ENCODE measurements at regions of chr1 and their contacts with region 1.

Region 1: DNA sequence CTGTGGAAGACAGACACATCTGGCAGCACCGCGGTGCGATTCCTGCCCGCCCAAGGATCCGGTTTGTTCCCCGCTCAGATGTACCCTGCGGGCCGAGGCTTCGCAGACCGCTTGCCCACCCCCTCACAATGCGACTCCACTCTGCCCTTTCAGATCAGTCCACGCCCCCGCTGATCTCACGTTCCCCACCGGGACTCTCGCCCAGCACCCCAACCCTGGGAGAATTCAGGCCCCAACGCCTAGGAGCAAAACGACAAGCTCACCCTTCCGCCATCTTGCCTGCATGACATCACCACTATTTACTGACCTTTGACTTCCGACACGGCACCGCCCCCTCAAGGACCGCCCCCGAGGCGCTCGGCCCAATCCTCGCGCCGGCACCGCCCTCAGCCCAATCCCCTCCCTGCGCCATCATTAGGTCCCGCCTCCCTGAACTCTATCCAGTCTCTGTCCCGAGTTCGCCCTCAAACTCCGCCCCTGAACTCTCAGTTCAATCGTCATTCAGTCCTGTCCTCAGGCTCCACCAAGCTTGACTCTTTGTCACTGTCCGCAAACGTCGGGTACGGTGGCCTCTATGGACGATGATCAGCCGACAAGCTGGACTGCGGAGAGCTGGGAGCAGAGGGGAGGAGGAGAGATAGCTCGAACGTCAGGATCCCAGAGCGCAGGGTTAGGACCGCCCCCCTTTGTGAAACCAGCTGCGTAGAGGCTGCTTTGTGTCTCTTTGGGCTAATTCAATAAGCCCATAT is at the start of gene BSDC1:
- DNase-seq: peak; percentile 97
- H3K27ac ChIP-seq: peak within 1 kb of the TSS; percentile 85
- CTCF ChIP-seq: no peak

Region 2: GRCh38 chr1:32151319-32151787 is 243.0 kb before region 1 on chr1:
- CTCF ChIA-PET with region 1: no interaction called
- POLR2A ChIA-PET with region 1: no interaction called
- DNase-seq: no peak
- H3K27ac ChIP-seq: no peak overlapping the region
- CTCF ChIP-seq: no peak

Region 3: GRCh38 chr1:32372149-32372756 is 22.1 kb before region 1 on chr1:
- CTCF ChIA-PET with region 1: no interaction called
- POLR2A ChIA-PET with region 1: no interaction called
- DNase-seq: no peak
- H3K27ac ChIP-seq: no peak overlapping the region
- CTCF ChIP-seq: no peak

Region 4: DNA sequence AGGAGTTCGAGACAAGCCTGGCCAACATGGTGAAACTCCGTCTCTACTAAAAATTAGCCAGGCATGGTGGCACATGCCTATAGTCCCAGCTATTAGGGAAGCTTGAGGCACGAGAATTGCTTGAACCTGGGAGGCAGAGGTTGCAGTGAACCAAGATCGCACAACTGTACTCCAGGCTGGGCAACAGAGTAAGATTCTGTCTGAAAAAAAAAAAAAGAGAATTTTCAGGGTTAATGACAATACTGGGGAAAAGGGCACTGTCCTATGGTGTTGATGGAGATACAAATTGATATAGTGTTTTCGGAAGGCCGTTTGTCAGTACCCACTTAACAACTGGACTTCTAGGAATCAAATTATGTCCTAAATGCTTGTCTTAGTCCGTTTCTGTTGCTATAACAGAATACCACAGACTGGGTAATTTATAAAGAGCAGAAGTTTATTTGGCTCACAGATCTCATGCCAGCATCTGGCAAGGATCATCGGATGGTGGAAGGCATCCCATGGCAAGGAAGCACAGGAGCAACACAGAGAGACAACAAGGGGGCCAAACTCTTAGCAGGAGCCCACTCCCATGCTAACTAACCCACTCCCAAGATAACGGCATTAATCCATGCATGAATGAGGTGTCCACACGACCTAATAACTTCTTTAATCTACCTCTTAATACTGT is 186.2 kb after region 1 on chr1:
- CTCF ChIA-PET with region 1: no interaction called
- POLR2A ChIA-PET with region 1: no interaction called
- DNase-seq: no peak
- H3K27ac ChIP-seq: no peak overlapping the region
- CTCF ChIP-seq: no peak

Region 5: GRCh38 chr1:32786856-32787255 is 392.5 kb after region 1 on chr1:
- CTCF ChIA-PET with region 1: no interaction called
- POLR2A ChIA-PET with region 1: interaction called, 10 read pairs
- DNase-seq: no peak
- H3K27ac ChIP-seq: peak overlapping the region; percentile 57
- CTCF ChIP-seq: no peak

Measured in RWPE1 (cell line).